ENCODE measurements at regions of chr4 and their contacts with region 1.

Region 1: GRCh38 chr4:139295206-139295941 is 5.9 kb upstream of the NAA15 start:
- DNase-seq: peak; percentile 96 to 99 (median 98)
- ATAC-seq: peak; percentile 91 to 97 (median 96)
- H3K4me3 ChIP-seq: peak overlapping the region; percentile 61 to 85 (median 71)
- H3K27ac ChIP-seq: peak overlapping the region; percentile 75 to 93 (median 85)
- H3K4me1 ChIP-seq: peaks cover 0 to 49% (median 28%) of the 10 kb centered on the region in 12 donors
- H3K27me3 ChIP-seq: no peaks in the 10 kb centered on the region
- CTCF ChIP-seq: peak; percentile 84 to 99 (median 96)
- POLR2A ChIP-seq: peak in 1 of 2 donors; percentile 49

Region 2: GRCh38 chr4:139030614-139031235 is 264.6 kb before region 1 on chr4:
- intact Hi-C with region 1: loop called in 9 of 10 experiments (anchors 2 to 10 kb)
- DNase-seq: peak in 4 of 5 donors; percentile 63 to 75 (median 66)
- ATAC-seq: peak in 3 of 4 donors; percentile 28 to 47 (median 33)
- H3K4me3 ChIP-seq: no peak overlapping the region
- H3K27ac ChIP-seq: peak overlapping the region in 2 of 12 donors; percentile 90 to 93
- H3K4me1 ChIP-seq: peaks cover 0 to 20% (median 11%) of the 10 kb centered on the region in 12 donors
- H3K27me3 ChIP-seq: no peaks in the 10 kb centered on the region
- CTCF ChIP-seq: peak; percentile 61 to 87 (median 79)
- POLR2A ChIP-seq: no peak

Region 3: DNA sequence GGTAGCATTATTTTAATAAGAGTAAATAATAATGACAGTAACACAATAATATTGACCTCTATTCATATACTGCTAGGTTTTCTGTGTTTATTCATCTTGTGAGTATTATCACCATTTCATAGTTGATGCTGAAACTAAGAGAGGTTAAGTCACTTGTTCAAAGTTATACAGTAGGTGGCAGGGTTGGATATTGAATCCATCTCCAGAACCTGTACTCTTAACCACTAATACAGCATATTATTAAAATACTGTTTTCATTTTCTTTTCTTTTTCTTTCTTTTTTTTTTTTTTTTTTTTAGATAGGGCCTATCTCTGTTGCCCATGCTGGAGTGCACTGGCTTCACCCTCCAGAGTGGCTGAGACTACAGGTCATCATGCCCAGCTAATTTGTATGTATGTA is 111.2 kb before region 1 on chr4:
- intact Hi-C with region 1: loop called in 4 of 10 experiments (anchors 5 kb)
- DNase-seq: no peak
- ATAC-seq: peak in 1 of 4 donors; percentile 59
- H3K4me3 ChIP-seq: no peak overlapping the region
- H3K27ac ChIP-seq: no peak overlapping the region
- H3K4me1 ChIP-seq: peaks cover 0 to 17% (median 0%) of the 10 kb centered on the region in 12 donors
- H3K27me3 ChIP-seq: no peaks in the 10 kb centered on the region
- CTCF ChIP-seq: peak in 5 of 12 donors; percentile 13 to 43 (median 33)
- POLR2A ChIP-seq: no peak

Region 4: DNA sequence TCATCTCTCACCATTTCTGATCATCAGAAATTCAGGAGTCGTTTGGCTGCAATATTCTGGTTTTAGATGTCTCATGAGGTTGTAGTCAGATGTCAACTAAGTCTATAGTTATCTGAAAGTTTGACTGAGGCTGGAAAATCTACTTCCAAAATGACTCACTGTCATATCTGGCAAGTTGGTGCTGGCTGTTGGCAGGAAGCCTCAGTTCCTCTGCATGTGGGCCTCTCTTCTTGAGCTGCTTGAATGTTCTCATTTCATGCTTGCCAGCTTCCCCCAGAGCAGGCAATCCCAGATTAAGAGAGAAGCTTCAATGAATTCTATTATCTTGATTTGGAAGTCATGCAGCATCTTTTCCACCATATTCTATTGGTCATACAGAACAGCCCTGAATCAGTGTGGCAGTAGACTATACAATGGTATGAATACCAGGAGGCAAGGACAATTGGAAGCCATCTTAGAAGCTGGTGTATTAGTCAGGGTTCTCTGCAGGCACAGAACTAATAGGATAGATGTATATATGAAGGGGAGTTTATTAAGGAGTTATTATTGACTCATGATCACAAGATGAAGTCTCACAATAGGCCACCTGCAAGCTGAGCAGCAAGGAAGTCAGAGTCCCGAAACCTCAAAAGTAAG is 71.6 kb before region 1 on chr4:
- intact Hi-C with region 1: loop called in 7 of 10 experiments (anchors 2 to 10 kb)
- DNase-seq: peak in 4 of 5 donors; percentile 20 to 68 (median 55)
- ATAC-seq: peak in 3 of 4 donors; percentile 28 to 66 (median 58)
- H3K4me3 ChIP-seq: no peak overlapping the region
- H3K27ac ChIP-seq: peak overlapping the region in 1 of 12 donors; percentile 4
- H3K4me1 ChIP-seq: peaks cover 0 to 8% (median 4%) of the 10 kb centered on the region in 12 donors
- H3K27me3 ChIP-seq: no peaks in the 10 kb centered on the region
- CTCF ChIP-seq: no peak
- POLR2A ChIP-seq: no peak

Region 5: DNA sequence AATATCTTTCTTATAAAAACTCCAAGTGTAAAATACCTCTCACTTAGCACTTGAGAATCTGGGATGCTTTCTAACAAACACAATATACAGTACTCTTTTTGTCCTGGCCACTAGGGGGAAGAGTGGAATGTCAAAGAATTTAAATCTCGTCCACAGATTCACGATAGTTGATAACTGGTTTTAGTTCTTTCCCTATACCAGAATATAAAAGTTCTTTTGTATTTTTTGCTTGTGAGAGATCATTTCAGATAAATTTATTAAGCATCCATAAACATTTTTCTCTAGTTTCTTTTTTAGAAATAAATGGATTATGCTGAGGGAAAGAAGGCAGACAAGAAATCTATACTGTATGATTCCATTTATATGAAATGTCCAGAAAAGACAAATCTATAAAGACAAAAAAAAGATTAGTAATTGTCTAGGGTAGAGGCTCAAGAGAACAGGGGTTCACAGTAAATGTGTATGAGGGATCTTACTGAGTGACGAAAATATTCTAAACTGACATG is 65.8 kb before region 1 on chr4:
- intact Hi-C with region 1: loop called in 8 of 10 experiments (anchors 1 to 10 kb)
- DNase-seq: no peak
- ATAC-seq: peak in 2 of 4 donors; percentile 60 to 67
- H3K4me3 ChIP-seq: no peak overlapping the region
- H3K27ac ChIP-seq: no peak overlapping the region
- H3K4me1 ChIP-seq: no peaks in the 10 kb centered on the region
- H3K27me3 ChIP-seq: no peaks in the 10 kb centered on the region
- CTCF ChIP-seq: peak; percentile 53 to 78 (median 67)
- POLR2A ChIP-seq: no peak

Region 6: GRCh38 chr4:139554893-139555704 is 259.7 kb after region 1 on chr4:
- intact Hi-C with region 1: loop called in 1 of 10 experiments (anchors 5 kb)
- DNase-seq: peak; percentile 93 to 95 (median 94)
- ATAC-seq: peak; percentile 79 to 85 (median 81)
- H3K4me3 ChIP-seq: peak overlapping the region; percentile 72 to 97 (median 93)
- H3K27ac ChIP-seq: peak overlapping the region; percentile 91 to 99 (median 97)
- H3K4me1 ChIP-seq: peaks cover 0 to 76% (median 53%) of the 10 kb centered on the region in 12 donors
- H3K27me3 ChIP-seq: no peaks in the 10 kb centered on the region
- CTCF ChIP-seq: no peak
- POLR2A ChIP-seq: peak in 1 of 2 donors; percentile 78

Region 7: DNA sequence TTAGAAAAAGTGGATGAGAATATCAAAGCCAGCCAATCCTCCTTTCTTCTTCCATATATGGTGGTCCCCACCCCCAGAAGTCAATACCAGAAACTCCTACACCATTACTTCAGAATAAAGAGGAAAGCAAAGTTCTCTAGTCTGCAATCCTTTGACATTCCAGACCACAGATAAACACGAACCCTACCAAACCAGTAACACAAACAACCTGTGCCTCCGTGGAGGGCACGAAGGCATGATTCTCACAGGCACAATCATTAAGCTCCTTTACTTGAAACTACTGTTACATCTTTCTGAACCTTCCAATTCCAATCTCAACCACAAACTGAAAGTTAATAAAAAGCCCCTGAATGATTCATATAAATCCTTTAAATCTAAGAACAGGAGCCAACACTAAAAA is 842.3 kb after region 1 on chr4:
- intact Hi-C with region 1: no loop called
- DNase-seq: no peak
- ATAC-seq: no peak
- H3K4me3 ChIP-seq: no peak overlapping the region
- H3K27ac ChIP-seq: no peak overlapping the region
- H3K4me1 ChIP-seq: peaks cover 0 to 25% (median 11%) of the 10 kb centered on the region in 12 donors
- H3K27me3 ChIP-seq: no peaks in the 10 kb centered on the region
- CTCF ChIP-seq: no peak
- POLR2A ChIP-seq: no peak

Measured in heart left ventricle (tissue), 16 donors.